ENCODE measurements at regions of chr7 and their contacts with region 1.

Region 1: DNA sequence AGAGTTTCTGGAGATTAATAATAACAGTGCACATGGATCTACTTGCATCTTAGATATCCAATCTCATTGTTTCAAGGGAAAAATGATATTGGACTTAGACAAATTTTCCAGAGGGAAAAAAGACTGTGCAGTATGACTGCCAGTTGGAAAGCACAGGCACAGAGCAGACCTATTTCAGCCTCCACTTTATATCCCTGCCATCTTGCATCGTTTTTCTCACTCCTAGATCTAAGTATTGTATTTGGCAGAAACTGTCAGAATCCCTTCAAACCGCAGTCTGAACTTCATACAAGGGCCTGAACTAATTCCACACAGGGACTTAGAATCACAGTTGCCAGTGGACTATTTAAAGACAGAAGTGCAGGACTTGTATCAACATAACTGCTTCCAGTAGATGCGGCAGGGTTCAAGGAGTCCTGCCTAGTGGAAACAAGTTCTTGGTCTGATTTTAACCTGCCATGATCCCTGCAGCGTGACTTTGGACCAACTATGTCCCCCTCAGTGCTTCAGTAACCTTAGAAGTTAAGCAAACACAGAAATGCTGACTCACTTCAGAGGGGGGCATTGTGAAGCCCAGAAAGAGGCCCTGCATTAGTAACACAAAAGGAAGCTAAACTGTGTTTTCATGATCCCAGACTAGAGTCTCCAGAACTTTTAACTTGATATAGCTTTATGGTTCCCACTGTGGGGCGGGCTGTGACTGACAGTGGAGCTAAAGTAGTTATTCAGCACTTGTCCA is 95.7 kb upstream of the PALS2 start:
- DNase-seq: peak in 1 of 2 donors; percentile 21
- ATAC-seq: peak; percentile 54 to 81
- H3K4me3 ChIP-seq: no peak overlapping the region
- H3K27ac ChIP-seq: peak overlapping the region; percentile 32 to 77 (median 43)
- H3K4me1 ChIP-seq: peaks cover 12 to 14% of the 10 kb centered on the region in 2 donors
- H3K27me3 ChIP-seq: no peaks in the 10 kb centered on the region
- CTCF ChIP-seq: no peak
- POLR2A ChIP-seq: no peak

Region 2: DNA sequence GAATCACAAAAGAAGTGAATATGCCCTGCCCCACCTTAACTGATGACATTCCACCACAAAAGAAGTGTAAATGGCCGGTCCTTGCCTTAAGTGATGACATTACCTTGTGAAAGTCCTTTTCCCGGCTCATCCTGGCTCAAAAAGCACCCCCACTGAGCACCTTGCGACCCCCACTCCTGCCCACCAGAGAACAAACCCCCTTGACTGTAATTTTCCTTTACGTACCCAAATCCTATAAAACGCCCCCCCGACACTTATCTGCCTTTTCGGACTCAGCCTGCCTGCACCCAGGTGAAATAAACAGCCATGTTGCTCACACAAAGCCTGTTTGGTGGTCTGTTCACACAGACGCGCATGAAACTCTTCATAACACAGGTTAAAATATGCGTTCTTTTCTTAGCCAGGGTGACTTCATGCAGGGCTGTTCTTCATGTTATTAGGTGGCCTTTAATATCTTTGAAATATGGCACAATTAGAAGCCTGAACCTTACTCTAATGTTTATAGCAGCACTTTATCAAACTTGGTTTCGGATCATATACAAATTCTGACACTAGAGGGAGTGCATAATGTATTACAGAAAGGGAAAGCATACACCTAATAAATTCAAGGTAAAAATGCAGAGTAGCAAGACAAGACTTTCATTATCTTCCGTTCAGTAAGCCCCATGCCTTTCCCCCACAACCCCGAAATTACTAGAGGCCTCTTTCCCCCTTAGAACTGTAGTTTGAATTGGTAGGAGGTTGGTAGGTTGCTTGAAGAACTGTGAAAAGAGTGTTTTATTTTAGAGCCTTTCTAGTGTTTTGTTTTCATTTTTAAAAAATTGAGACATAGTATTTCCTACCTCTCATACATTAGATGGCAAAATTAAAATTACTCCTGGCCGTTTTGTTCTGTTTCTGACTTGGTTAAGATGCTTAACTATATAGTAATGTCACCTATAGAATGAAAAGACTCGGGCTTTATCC is 75.7 kb before region 1 on chr7:
- in situ Hi-C with region 1: no loop called
- intact Hi-C with region 1: no loop called
- DNase-seq: no peak
- ATAC-seq: peak; percentile 58 to 70
- H3K4me3 ChIP-seq: peak overlapping the region in 3 of 4 donors; percentile 17 to 39 (median 27)
- H3K27ac ChIP-seq: no peak overlapping the region
- H3K4me1 ChIP-seq: no peaks in the 10 kb centered on the region
- H3K27me3 ChIP-seq: no peaks in the 10 kb centered on the region
- CTCF ChIP-seq: peak in 3 of 5 experiments; percentile 27 to 41 (median 41)
- POLR2A ChIP-seq: no peak

Region 3: GRCh38 chr7:24455813-24456525 is 21.6 kb before region 1 on chr7:
- in situ Hi-C with region 1: no loop called
- intact Hi-C with region 1: loop called (anchors 2 kb)
- DNase-seq: no peak
- ATAC-seq: peak; percentile 33 to 37
- H3K4me3 ChIP-seq: no peak overlapping the region
- H3K27ac ChIP-seq: peak overlapping the region in 3 of 4 donors; percentile 60 to 77 (median 71)
- H3K4me1 ChIP-seq: peaks cover 22 to 24% of the 10 kb centered on the region in 2 donors
- H3K27me3 ChIP-seq: no peaks in the 10 kb centered on the region
- CTCF ChIP-seq: no peak
- POLR2A ChIP-seq: no peak

Region 4: DNA sequence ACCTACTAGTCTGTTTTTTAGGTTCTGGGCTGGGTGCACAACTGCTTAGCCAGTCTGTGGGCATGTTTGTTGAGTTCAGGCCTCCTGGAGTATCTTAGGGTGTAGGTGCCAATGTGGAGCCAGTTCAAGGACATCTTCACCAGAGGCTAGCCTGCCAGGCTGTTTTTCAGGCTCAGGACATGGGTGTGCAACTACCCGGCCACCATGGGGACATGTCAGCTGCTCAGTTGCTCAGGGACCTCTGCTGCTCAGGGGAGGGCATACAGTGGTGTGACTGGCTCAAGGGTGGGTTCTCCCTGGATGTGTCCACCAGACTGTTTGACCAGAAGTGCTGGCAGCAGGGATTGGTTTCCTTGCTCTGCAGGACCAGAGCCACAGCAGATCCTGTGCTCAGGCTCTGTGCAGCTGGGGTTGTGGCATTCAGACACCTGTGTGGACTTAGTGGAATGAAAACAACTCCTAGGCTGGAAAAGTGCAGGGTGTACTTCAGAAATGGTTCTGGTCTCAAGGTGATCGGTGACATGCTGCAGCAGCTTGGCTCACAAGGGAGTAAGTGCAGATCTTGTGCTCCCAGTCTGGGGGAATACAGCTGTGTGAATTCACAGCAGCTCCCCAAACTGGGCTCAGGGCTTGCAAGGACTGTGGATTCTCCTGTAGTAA is 140.5 kb after region 1 on chr7:
- in situ Hi-C with region 1: no loop called
- intact Hi-C with region 1: no loop called
- DNase-seq: no peak
- ATAC-seq: peak in 1 of 2 donors; percentile 50
- H3K4me3 ChIP-seq: no peak overlapping the region
- H3K27ac ChIP-seq: peak overlapping the region in 1 of 4 donors; percentile 4
- H3K4me1 ChIP-seq: peaks cover 0 to 7% of the 10 kb centered on the region in 2 donors
- H3K27me3 ChIP-seq: no peaks in the 10 kb centered on the region
- CTCF ChIP-seq: no peak
- POLR2A ChIP-seq: no peak